Colonic mucosa (tissue), 4 donors: ENCODE measurements at regions of chr4 and their contacts with region 1.

Region 1: GRCh38 chr4:149370785-149371420 is 444.7 kb downstream of the IQCM start:
- DNase-seq: peak; percentile 21
- H3K4me3 ChIP-seq: no peak overlapping the region
- H3K27ac ChIP-seq: no peak overlapping the region
- H3K4me1 ChIP-seq: no peaks in the 10 kb centered on the region
- H3K27me3 ChIP-seq: no peaks in the 10 kb centered on the region
- CTCF ChIP-seq: peak; percentile 30

Region 2: DNA sequence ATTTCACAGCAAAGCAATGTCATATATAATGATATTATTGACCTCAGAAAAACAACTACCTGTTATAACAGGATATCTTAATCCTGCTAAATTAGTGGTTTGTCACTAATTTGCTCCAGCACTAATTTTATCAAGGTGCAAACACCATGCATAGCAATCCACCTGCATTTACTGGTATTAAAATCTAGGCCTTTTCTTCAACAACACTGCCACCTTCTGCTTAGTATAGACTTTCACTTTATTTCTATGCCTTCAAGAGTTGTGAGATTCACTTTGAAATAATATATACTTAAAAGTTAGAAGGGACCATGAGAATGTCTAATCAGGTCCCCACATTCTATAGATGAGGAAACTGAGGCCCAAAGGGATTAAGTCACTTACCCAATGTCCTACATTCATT is 526.9 kb after region 1 on chr4:
- intact Hi-C with region 1: loop called (anchors 2 kb)
- DNase-seq: no peak
- H3K4me3 ChIP-seq: no peak overlapping the region
- H3K27ac ChIP-seq: no peak overlapping the region
- H3K4me1 ChIP-seq: no peaks in the 10 kb centered on the region
- H3K27me3 ChIP-seq: no peaks in the 10 kb centered on the region
- CTCF ChIP-seq: no peak